Motor neuron (in vitro differentiated cells): ENCODE measurements at regions of chr14 and their contacts with region 1.

Region 1: DNA sequence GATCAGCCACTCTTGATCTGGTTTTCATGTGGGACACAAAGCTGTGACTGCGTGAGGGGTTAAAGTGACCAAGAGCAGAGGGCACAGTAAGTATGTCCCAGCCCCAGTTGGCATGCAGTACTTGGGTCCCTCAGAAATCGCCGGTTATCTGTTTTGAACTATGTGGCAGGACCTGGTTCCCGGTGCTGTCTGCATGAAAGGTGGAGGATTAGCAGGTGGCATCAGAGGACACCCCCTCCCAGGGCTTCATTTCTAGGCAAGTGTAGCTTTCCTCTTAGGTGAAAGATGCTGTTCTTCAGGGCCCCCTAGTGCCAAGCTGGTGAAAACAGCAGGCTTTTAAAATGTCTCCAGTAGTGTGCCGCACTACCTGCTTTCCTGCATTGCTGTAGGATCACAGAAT is 57.1 kb downstream of the ATG14 start:
- ATAC-seq: peak; percentile 56 to 91 (median 70)
- H3K4me3 ChIP-seq: no peak overlapping the region
- H3K27ac ChIP-seq: no peak overlapping the region
- H3K4me1 ChIP-seq: no peaks in the 10 kb centered on the region

Region 2: GRCh38 chr14:55107766-55108554 is 246.5 kb before region 1 on chr14:
- in situ Hi-C with region 1: no loop called
- ATAC-seq: peak; percentile 45 to 98 (median 96)
- H3K4me3 ChIP-seq: no peak overlapping the region
- H3K27ac ChIP-seq: peak overlapping the region in 1 of 2 donors; percentile 60
- H3K4me1 ChIP-seq: peaks cover 5 to 15% of the 10 kb centered on the region in 2 donors

Region 3: DNA sequence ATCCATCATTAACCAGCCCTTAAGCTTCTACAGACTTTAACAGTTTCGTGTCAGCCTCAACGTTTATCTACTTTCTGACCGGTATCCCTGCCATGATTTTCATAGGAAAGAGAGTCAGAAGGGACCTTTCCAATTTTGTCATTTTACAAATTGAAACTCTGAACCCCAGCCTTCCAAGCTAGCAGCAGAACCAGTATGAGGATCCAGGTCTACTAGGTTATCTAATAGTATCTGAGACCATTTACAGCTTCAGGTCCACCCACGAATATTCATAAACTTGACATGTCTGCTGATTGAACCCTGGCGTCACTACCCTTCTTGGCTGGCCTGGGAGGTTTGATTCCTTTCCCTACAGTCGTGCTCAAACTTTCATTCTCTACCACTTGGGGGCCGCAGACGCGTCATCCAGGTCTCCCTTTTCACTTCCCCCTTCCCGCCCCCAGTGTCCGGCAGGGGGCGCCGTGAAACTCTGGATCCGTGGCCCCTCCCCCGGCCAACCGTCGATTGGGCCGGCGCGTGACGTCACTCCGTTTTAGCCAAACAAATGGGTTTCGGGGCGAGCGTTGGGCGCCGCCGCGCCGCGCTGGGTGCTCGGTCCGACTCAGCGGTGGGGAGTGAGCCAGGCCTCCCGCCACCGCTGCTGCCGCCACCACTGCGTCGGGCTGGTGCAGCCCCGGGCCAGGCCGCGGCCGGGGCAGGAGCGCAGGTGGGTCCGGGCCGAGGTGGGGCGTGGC is 83.5 kb before region 1 on chr14 and contains the start of gene FBXO34:
- in situ Hi-C with region 1: loop called in 2 of 9 experiments (anchors 25 kb)
- ATAC-seq: peak; percentile 86 to 90 (median 88)
- H3K4me3 ChIP-seq: peak within 1 kb of the TSS; percentile 49 to 100 (median 83)
- H3K27ac ChIP-seq: peak within 1 kb of the TSS; percentile 79 to 94
- H3K4me1 ChIP-seq: peaks cover 2 to 9% of the 10 kb centered on the region in 2 donors
- total RNA-seq, gene FBXO34: 14.1 to 31.9 (median 20.6) TPM

Region 4: GRCh38 chr14:55609681-55610080 is 255.2 kb after region 1 on chr14:
- in situ Hi-C with region 1: no loop called
- ATAC-seq: peak in 5 of 8 experiments; percentile 36 to 67 (median 42)
- H3K4me3 ChIP-seq: no peak overlapping the region
- H3K27ac ChIP-seq: no peak overlapping the region
- H3K4me1 ChIP-seq: no peaks in the 10 kb centered on the region

Region 5: DNA sequence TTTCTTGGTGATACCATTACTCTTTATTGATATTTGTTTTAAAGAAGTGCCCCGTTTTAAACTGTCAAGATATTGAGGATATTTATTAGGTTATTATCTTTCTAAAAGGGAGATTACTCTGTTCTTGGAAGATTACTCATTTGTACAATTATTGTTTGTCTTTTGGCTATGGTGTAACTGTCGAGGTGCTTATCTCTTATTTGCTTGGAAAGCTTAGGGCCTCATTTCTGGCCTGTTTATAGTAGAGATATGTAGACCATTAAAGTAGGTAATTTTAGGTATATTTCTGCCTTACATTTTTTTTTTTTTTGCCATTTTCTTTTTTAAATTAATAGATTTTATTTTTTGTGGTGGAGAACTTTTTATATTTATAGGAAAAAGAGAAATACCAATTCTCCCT is 299.7 kb after region 1 on chr14:
- in situ Hi-C with region 1: no loop called
- ATAC-seq: no peak
- H3K4me3 ChIP-seq: no peak overlapping the region
- H3K27ac ChIP-seq: no peak overlapping the region
- H3K4me1 ChIP-seq: no peaks in the 10 kb centered on the region